ENCODE measurements at regions of chr2 and their contacts with region 1.

Region 1: GRCh38 chr2:140144611-140145010 is 1364.4 kb upstream of the NXPH2 start:
- DNase-seq: peak; percentile 97
- H3K4me3 ChIP-seq: peak overlapping the region; percentile 21
- H3K27ac ChIP-seq: peak overlapping the region; percentile 98
- H3K4me1 ChIP-seq: peaks cover 46% of the 10 kb centered on the region
- H3K27me3 ChIP-seq: no peaks in the 10 kb centered on the region
- CTCF ChIP-seq: no peak

Region 2: DNA sequence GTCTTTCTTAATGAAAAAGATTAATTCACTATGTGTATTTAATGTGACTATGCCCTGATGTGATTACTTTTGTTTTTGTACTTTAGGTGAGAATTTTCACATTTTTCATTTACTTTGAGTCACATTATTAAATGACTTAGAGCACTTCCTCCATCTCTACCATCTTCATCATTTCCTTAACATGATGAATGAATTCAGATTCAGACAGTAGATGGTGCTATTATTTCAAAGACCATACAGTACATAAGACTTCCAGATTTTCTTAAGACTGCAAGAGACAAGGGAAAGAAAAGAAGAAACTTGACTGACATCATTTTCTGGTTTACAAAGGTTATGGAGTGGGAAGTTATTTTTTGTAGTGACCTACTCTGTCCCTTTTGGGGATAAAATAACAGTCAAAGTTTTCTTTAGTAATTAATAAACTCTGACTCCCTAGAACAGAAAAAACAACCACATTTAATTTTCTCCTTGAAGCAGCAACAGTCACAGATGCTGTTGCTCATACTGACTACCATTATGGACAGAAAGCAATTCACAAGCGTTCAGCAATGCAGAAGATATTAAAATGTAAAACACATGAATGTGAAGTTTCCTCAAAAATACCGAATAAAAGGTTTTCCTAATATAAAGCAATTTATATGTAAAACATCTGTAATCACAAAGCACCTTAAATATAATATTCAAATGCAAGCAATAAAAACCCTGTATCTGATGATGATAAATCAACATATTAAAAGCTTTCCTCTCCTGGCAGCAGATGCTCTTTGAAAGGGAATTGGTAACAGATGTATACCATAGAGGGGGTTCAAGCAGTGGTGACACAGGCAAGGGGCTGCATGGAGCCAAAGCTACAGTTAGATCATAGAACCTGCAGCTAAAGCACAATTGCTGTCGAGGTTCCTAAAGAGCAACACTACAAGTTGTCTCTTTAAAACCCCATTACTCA is 353.5 kb before region 1 on chr2:
- CTCF ChIA-PET with region 1: no interaction called
- POLR2A ChIA-PET with region 1: interaction called, 4 read pairs
- intact Hi-C with region 1: loop called (anchors 1 kb)
- DNase-seq: peak; percentile 83
- H3K4me3 ChIP-seq: no peak overlapping the region
- H3K27ac ChIP-seq: no peak overlapping the region
- H3K4me1 ChIP-seq: peaks cover 19% of the 10 kb centered on the region
- H3K27me3 ChIP-seq: no peaks in the 10 kb centered on the region
- CTCF ChIP-seq: peak; percentile 72

Region 3: DNA sequence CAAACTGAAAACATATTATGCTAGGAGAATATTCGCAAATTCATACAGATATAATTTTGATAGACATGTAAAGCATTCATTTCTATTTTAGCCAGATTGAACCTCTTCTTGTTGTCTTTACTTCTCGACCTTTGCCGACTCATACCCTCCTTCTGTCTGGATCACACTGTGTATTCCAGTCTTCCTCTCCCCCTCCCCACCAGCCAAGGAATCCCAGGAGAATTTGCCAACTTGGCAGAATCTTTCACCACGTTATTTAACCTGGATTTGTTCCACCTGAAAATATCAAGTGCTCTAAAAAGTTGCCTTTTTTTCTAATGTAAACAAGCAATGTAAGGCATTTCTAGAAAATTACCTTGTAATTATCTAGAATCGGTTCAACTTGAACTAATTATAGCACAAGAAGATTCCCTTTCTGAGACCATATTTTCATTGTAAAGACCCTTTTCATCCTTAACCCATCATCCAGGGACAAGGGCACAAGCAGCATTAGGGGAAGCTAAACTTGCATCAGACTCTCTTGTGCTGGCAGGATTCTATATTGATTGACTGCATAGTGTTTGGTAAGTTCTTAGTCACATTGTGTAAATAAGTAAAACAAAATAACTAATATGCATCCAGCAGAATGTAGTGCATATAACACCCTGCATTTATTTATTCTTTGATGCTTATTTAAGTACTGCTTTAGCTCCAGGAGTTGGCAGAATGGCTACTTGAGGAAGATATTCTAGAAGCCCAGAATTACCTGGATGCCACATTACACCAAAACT is 35.7 kb before region 1 on chr2:
- CTCF ChIA-PET with region 1: interaction called, 16 read pairs
- POLR2A ChIA-PET with region 1: no interaction called
- intact Hi-C with region 1: loop called (anchors 5 kb)
- DNase-seq: no peak
- H3K4me3 ChIP-seq: no peak overlapping the region
- H3K27ac ChIP-seq: no peak overlapping the region
- H3K4me1 ChIP-seq: peaks cover 11% of the 10 kb centered on the region
- H3K27me3 ChIP-seq: no peaks in the 10 kb centered on the region
- CTCF ChIP-seq: no peak

Region 4: DNA sequence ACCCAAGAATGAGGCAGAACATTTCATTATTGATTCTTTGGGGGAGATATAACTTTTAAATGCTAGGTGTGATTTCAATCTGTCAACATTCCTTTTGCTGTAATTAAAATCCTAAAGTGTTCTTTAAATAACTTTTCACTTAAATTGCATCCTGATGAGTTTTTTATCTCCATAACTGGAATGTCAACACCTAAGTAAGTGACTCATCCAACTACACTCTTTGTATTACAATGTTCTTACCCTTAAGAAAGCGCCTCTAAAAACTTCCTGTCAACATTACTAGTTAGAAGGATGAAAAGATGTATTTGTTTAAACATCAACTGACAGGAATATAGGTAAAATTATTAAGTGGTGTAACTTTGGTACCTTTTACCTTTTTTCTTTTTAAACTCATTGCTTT is 329.2 kb after region 1 on chr2:
- CTCF ChIA-PET with region 1: no interaction called
- POLR2A ChIA-PET with region 1: no interaction called
- intact Hi-C with region 1: no loop called
- DNase-seq: no peak
- H3K4me3 ChIP-seq: no peak overlapping the region
- H3K27ac ChIP-seq: no peak overlapping the region
- H3K4me1 ChIP-seq: no peaks in the 10 kb centered on the region
- H3K27me3 ChIP-seq: no peaks in the 10 kb centered on the region
- CTCF ChIP-seq: no peak

Region 5: GRCh38 chr2:140972724-140973123 is 828.1 kb after region 1 on chr2:
- CTCF ChIA-PET with region 1: no interaction called
- POLR2A ChIA-PET with region 1: no interaction called
- intact Hi-C with region 1: loop called (anchors 10 kb)
- DNase-seq: no peak
- H3K4me3 ChIP-seq: no peak overlapping the region
- H3K27ac ChIP-seq: no peak overlapping the region
- H3K4me1 ChIP-seq: no peaks in the 10 kb centered on the region
- H3K27me3 ChIP-seq: no peaks in the 10 kb centered on the region
- CTCF ChIP-seq: no peak

Measured in A673 (cell line).